ENCODE measurements at regions of chr19 and their contacts with region 1.

Region 1: DNA sequence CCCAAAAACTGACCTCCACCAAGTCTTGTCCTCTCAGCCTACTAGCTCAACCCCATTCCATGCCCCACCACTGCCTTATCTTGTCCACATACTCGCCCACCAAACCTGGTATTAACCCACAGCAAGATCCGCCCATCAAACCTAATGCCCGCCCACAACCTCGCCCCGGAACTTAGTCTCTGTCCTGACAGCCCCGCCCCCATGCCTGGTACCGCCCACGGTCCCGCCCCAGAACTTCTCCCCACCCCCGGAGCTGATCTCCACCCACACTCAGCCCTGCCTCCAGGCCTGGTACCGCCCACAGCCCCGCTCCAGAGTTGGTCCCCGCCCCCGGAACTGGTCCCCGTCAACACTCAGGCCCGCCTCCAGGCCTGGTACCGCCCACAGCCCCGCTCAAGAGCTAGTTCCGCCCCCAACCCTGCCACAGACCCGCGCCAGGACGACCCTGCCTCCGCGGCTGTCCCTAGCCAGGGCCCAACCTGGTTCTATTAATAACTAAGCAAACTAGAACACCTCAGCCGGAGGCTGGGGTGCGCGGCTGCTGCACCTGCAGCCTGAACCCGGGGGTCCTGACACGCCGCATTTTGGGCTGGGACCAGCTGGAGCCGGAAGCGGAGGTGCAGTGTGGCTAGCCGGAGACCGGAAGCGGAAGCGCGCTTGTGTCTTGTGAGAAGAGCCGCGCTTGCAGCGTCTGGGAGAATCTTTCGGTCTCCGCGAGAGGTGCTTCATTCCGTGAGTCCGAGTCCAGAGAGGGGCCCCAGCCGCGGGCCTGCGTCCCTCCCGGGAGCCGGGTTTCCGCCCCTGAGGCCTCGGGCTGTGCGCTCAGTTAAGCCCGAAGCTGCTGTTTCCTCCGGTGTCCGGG is at the start of gene ZNF557:
- DNase-seq: peak; percentile 93 to 100 (median 99)
- ATAC-seq: peak; percentile 99
- H3K4me3 ChIP-seq: peak within 1 kb of the TSS; percentile 100
- H3K4me3 Mint-ChIP-seq: peak within 1 kb of the TSS; percentile 90 to 98 (median 94)
- H3K27ac ChIP-seq: peak within 1 kb of the TSS; percentile 84
- H3K27ac Mint-ChIP-seq: peak within 1 kb of the TSS; percentile 63 to 95 (median 94)
- H3K4me1 ChIP-seq: peaks cover 14% of the 10 kb centered on the region in 2 donors
- H3K4me1 Mint-ChIP-seq: peaks cover 7 to 40% (median 19%) of the 10 kb centered on the region in 7 donors
- H3K27me3 ChIP-seq: no peaks in the 10 kb centered on the region
- H3K27me3 Mint-ChIP-seq: no peaks in the 10 kb centered on the region
- total RNA-seq, gene ZNF557: 11.7 to 36.2 (median 20.0) TPM

Region 2: GRCh38 chr19:6465006-6465405 is 604.3 kb before region 1 on chr19:
- CTCF ChIA-PET with region 1: no interaction called
- POLR2A ChIA-PET with region 1: no interaction called
- intact Hi-C with region 1: no loop called
- DNase-seq: no peak
- ATAC-seq: no peak
- H3K4me3 ChIP-seq: no peak overlapping the region
- H3K4me3 Mint-ChIP-seq: peak overlapping the region; percentile 23 to 84 (median 74)
- H3K27ac ChIP-seq: peak overlapping the region; percentile 64
- H3K27ac Mint-ChIP-seq: peak overlapping the region in 8 of 9 donors; percentile 68 to 85 (median 78)
- H3K4me1 ChIP-seq: peaks cover 0 to 4% of the 10 kb centered on the region in 2 donors
- H3K4me1 Mint-ChIP-seq: peaks cover 4 to 28% (median 25%) of the 10 kb centered on the region in 7 donors
- H3K27me3 ChIP-seq: no peaks in the 10 kb centered on the region
- H3K27me3 Mint-ChIP-seq: peaks cover 0 to 8% (median 0%) of the 10 kb centered on the region in 5 donors

Region 3: GRCh38 chr19:6876748-6877147 is 192.5 kb before region 1 on chr19:
- CTCF ChIA-PET with region 1: no interaction called
- POLR2A ChIA-PET with region 1: no interaction called
- intact Hi-C with region 1: no loop called
- DNase-seq: no peak
- ATAC-seq: peak; percentile 27
- H3K4me3 ChIP-seq: no peak overlapping the region
- H3K4me3 Mint-ChIP-seq: peak overlapping the region in 1 of 10 donors; percentile 36
- H3K27ac ChIP-seq: no peak overlapping the region
- H3K27ac Mint-ChIP-seq: peak overlapping the region in 4 of 9 donors; percentile 19 to 84 (median 58)
- H3K4me1 ChIP-seq: peaks cover 0 to 13% of the 10 kb centered on the region in 2 donors
- H3K4me1 Mint-ChIP-seq: peaks cover 6 to 44% (median 17%) of the 10 kb centered on the region in 7 donors
- H3K27me3 ChIP-seq: no peaks in the 10 kb centered on the region
- H3K27me3 Mint-ChIP-seq: peaks cover 0 to 12% (median 0%) of the 10 kb centered on the region in 5 donors

Region 4: GRCh38 chr19:6997679-6998445 is 71.4 kb before region 1 on chr19:
- CTCF ChIA-PET with region 1: no interaction called
- POLR2A ChIA-PET with region 1: interaction called, 10 read pairs
- intact Hi-C with region 1: no loop called
- DNase-seq: peak in 4 of 9 donors; percentile 17 to 28 (median 24)
- ATAC-seq: peak; percentile 76
- H3K4me3 ChIP-seq: peak overlapping the region; percentile 15
- H3K4me3 Mint-ChIP-seq: peak overlapping the region; percentile 61 to 90 (median 84)
- H3K27ac ChIP-seq: peak overlapping the region; percentile 67
- H3K27ac Mint-ChIP-seq: peak overlapping the region in 8 of 9 donors; percentile 70 to 97 (median 90)
- H3K4me1 ChIP-seq: no peaks in the 10 kb centered on the region
- H3K4me1 Mint-ChIP-seq: peaks cover 15 to 62% (median 52%) of the 10 kb centered on the region in 7 donors
- H3K27me3 ChIP-seq: no peaks in the 10 kb centered on the region
- H3K27me3 Mint-ChIP-seq: peaks cover 0 to 2% (median 0%) of the 10 kb centered on the region in 5 donors

Region 5: GRCh38 chr19:7083076-7083956 is 14.0 kb after region 1 on chr19:
- CTCF ChIA-PET with region 1: interaction called, 3 read pairs
- POLR2A ChIA-PET with region 1: interaction called, 23 read pairs
- intact Hi-C with region 1: loop called in 1 of 2 experiments (anchors 1 kb)
- DNase-seq: peak in 2 of 9 donors; percentile 20 to 26
- ATAC-seq: no peak
- H3K4me3 ChIP-seq: peak overlapping the region; percentile 1
- H3K4me3 Mint-ChIP-seq: peak overlapping the region in 4 of 10 donors; percentile 9 to 60 (median 39)
- H3K27ac ChIP-seq: no peak overlapping the region
- H3K27ac Mint-ChIP-seq: peak overlapping the region in 5 of 9 donors; percentile 1 to 75 (median 53)
- H3K4me1 ChIP-seq: no peaks in the 10 kb centered on the region
- H3K4me1 Mint-ChIP-seq: peaks cover 0 to 12% (median 3%) of the 10 kb centered on the region in 7 donors
- H3K27me3 ChIP-seq: no peaks in the 10 kb centered on the region
- H3K27me3 Mint-ChIP-seq: no peaks in the 10 kb centered on the region

Region 6: GRCh38 chr19:7629347-7630054 is 560.2 kb after region 1 on chr19 and contains the starts of genes PET100 and XAB2:
- CTCF ChIA-PET with region 1: no interaction called
- POLR2A ChIA-PET with region 1: interaction called, 15 read pairs
- intact Hi-C with region 1: no loop called
- DNase-seq: peak; percentile 81 to 97 (median 95)
- ATAC-seq: peak; percentile 97
- H3K4me3 ChIP-seq: peak within 1 kb of the TSS; percentile 89
- H3K4me3 Mint-ChIP-seq: peak within 1 kb of the TSS; percentile 87 to 100 (median 98)
- H3K27ac ChIP-seq: peak within 1 kb of the TSS; percentile 92
- H3K27ac Mint-ChIP-seq: peak within 1 kb of the TSS; percentile 96 to 100 (median 99)
- H3K4me1 ChIP-seq: peaks cover 19 to 21% of the 10 kb centered on the region in 2 donors
- H3K4me1 Mint-ChIP-seq: peaks cover 25 to 57% (median 38%) of the 10 kb centered on the region in 7 donors
- H3K27me3 ChIP-seq: no peaks in the 10 kb centered on the region
- H3K27me3 Mint-ChIP-seq: no peaks in the 10 kb centered on the region
- total RNA-seq, gene PET100: 112 to 134 (median 117) TPM
- total RNA-seq, gene XAB2: 49.3 to 79.8 (median 76.4) TPM

Measured in naive thymus-derived CD4-positive, alpha-beta T cell (primary cell).